Calu3 (cell line): ENCODE measurements at regions of chr6 and their contacts with region 1.

Region 1: GRCh38 chr6:166999145-166999883 is at the start of gene CEP43:
- DNase-seq: peak; percentile 96
- H3K4me3 Mint-ChIP-seq: peak within 1 kb of the TSS; percentile 67
- H3K27ac Mint-ChIP-seq: peak within 1 kb of the TSS; percentile 71
- H3K4me1 Mint-ChIP-seq: peaks cover 29% of the 10 kb centered on the region
- H3K27me3 Mint-ChIP-seq: no peaks in the 10 kb centered on the region
- CTCF ChIP-seq: no peak
- total RNA-seq, gene CEP43: 28.3 and 34.9 TPM in 2 replicates

Region 2: GRCh38 chr6:166956444-166957086 is 42.7 kb before region 1 on chr6 and contains the start of gene RNASET2:
- CTCF ChIA-PET with region 1: no interaction called
- intact Hi-C with region 1: loop called (anchors 5 kb)
- DNase-seq: peak; percentile 99
- H3K4me3 Mint-ChIP-seq: peak within 1 kb of the TSS; percentile 89
- H3K27ac Mint-ChIP-seq: peak within 1 kb of the TSS; percentile 70
- H3K4me1 Mint-ChIP-seq: peaks cover 36% of the 10 kb centered on the region
- H3K27me3 Mint-ChIP-seq: no peaks in the 10 kb centered on the region
- CTCF ChIP-seq: no peak
- total RNA-seq, gene RNASET2: 65.2 and 70.2 TPM in 2 replicates

Region 3: DNA sequence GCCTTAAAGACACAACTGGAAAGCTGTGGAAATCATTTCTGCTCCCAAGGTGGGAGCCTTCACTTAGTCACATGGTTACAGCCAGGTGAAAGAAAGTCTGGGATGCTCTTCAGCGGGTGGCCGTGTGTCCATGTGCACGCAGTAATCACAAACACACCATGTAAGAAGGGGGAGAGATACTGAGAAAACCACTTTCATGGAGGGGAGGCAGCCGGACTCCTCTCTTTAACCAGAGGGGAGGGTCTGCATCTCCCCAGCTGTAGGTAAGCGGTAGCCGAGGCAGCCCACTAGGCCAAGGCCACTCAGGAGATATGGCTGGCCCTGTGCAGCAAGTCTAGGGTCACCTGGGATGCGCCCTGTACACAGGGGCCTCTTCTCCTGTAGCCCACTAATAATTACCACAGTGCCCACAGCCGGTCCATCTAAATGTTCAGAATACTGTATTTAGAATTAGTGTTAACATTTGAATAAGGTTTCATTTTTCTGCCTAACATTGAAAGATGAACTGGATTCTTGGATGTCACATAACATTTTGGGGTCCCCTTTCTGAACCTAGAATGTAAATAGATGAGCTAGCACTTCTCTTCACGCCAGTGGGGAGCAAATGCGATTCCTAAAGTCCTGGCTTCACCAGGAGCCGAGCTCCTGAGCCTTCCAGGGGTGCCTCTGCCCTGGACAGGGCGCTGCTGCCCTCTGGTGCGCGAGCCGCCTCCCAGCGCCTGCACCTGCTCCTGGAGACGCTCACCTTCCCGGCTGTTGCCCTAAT is 142.5 kb after region 1 on chr6:
- CTCF ChIA-PET with region 1: interaction called, 9 read pairs
- intact Hi-C with region 1: loop called (anchors 5 kb)
- DNase-seq: peak; percentile 76
- H3K4me3 Mint-ChIP-seq: no peak overlapping the region
- H3K27ac Mint-ChIP-seq: no peak overlapping the region
- H3K4me1 Mint-ChIP-seq: peaks cover 8% of the 10 kb centered on the region
- H3K27me3 Mint-ChIP-seq: peaks cover 61% of the 10 kb centered on the region
- CTCF ChIP-seq: peak; percentile 51